B cell (primary cell): ENCODE measurements at regions of chr16 and their contacts with region 1.

Region 1: GRCh38 chr16:68244903-68245853 is at the start of gene PLA2G15:
- DNase-seq: peak; percentile 97
- ATAC-seq: peak; percentile 98
- H3K4me3 ChIP-seq: peak within 1 kb of the TSS; percentile 78 to 97 (median 96)
- H3K4me3 Mint-ChIP-seq: peak within 1 kb of the TSS; percentile 97
- H3K27ac ChIP-seq: peak within 1 kb of the TSS; percentile 12 to 28
- H3K27ac Mint-ChIP-seq: peak within 1 kb of the TSS; percentile 50
- H3K4me1 ChIP-seq: peaks cover 25 to 33% of the 10 kb centered on the region in 2 donors
- H3K4me1 Mint-ChIP-seq: peaks cover 32% of the 10 kb centered on the region
- H3K27me3 ChIP-seq: no peaks in the 10 kb centered on the region
- H3K27me3 Mint-ChIP-seq: no peaks in the 10 kb centered on the region
- CTCF ChIP-seq: no peak
- total RNA-seq, gene PLA2G15: 10.8 and 12.5 TPM in 2 replicates

Region 2: GRCh38 chr16:68200088-68200783 is 44.9 kb before region 1 on chr16:
- CTCF ChIA-PET with region 1: no interaction called
- POLR2A ChIA-PET with region 1: no interaction called
- intact Hi-C with region 1: no loop called
- DNase-seq: no peak
- ATAC-seq: no peak
- H3K4me3 ChIP-seq: no peak overlapping the region
- H3K4me3 Mint-ChIP-seq: no peak overlapping the region
- H3K27ac ChIP-seq: peak overlapping the region in 1 of 2 donors; percentile 23
- H3K27ac Mint-ChIP-seq: no peak overlapping the region
- H3K4me1 ChIP-seq: no peaks in the 10 kb centered on the region
- H3K4me1 Mint-ChIP-seq: peaks cover 5% of the 10 kb centered on the region
- H3K27me3 ChIP-seq: no peaks in the 10 kb centered on the region
- H3K27me3 Mint-ChIP-seq: no peaks in the 10 kb centered on the region
- CTCF ChIP-seq: no peak

Region 3: GRCh38 chr16:68257906-68258800 is 13.0 kb after region 1 on chr16:
- CTCF ChIA-PET with region 1: interaction called, 65 read pairs
- POLR2A ChIA-PET with region 1: interaction called, 3 read pairs
- intact Hi-C with region 1: loop called (anchors 1 kb)
- DNase-seq: no peak
- ATAC-seq: peak; percentile 4
- H3K4me3 ChIP-seq: no peak overlapping the region
- H3K4me3 Mint-ChIP-seq: peak overlapping the region; percentile 41
- H3K27ac ChIP-seq: peak overlapping the region; percentile 50 to 55
- H3K27ac Mint-ChIP-seq: peak overlapping the region; percentile 90
- H3K4me1 ChIP-seq: peaks cover 20 to 37% of the 10 kb centered on the region in 2 donors
- H3K4me1 Mint-ChIP-seq: peaks cover 30% of the 10 kb centered on the region
- H3K27me3 ChIP-seq: no peaks in the 10 kb centered on the region
- H3K27me3 Mint-ChIP-seq: no peaks in the 10 kb centered on the region
- CTCF ChIP-seq: no peak

Region 4: GRCh38 chr16:68310761-68311511 is 65.8 kb after region 1 on chr16 and contains the starts of genes PRMT7 and SLC7A6OS:
- CTCF ChIA-PET with region 1: interaction called, 3 read pairs
- POLR2A ChIA-PET with region 1: interaction called, 3 read pairs
- intact Hi-C with region 1: loop called (anchors 1 kb)
- DNase-seq: peak; percentile 94
- ATAC-seq: peak; percentile 99
- H3K4me3 ChIP-seq: peak within 1 kb of the TSS; percentile 76 to 96 (median 94)
- H3K4me3 Mint-ChIP-seq: peak within 1 kb of the TSS; percentile 98
- H3K27ac ChIP-seq: peak within 1 kb of the TSS; percentile 59 to 76
- H3K27ac Mint-ChIP-seq: peak within 1 kb of the TSS; percentile 96
- H3K4me1 ChIP-seq: peaks cover 20 to 24% of the 10 kb centered on the region in 2 donors
- H3K4me1 Mint-ChIP-seq: peaks cover 37% of the 10 kb centered on the region
- H3K27me3 ChIP-seq: no peaks in the 10 kb centered on the region
- H3K27me3 Mint-ChIP-seq: no peaks in the 10 kb centered on the region
- CTCF ChIP-seq: peak; percentile 36
- total RNA-seq, gene PRMT7: 76.9 and 79.0 TPM in 2 replicates
- total RNA-seq, gene SLC7A6OS: 52.0 and 54.1 TPM in 2 replicates